Heart left ventricle (tissue), 16 donors: ENCODE measurements at regions of chr14 and their contacts with region 1.

Region 1: GRCh38 chr14:104708606-104709268 is 15.3 kb upstream of the ADSS1 start:
- DNase-seq: peak; percentile 59 to 84 (median 71)
- ATAC-seq: peak; percentile 39 to 74 (median 62)
- H3K4me3 ChIP-seq: no peak overlapping the region
- H3K27ac ChIP-seq: no peak overlapping the region
- H3K4me1 ChIP-seq: peaks cover 0 to 27% (median 5%) of the 10 kb centered on the region in 12 donors
- H3K27me3 ChIP-seq: no peaks in the 10 kb centered on the region
- CTCF ChIP-seq: peak; percentile 95 to 99 (median 97)
- POLR2A ChIP-seq: no peak

Region 2: GRCh38 chr14:104650057-104650981 is 58.4 kb before region 1 on chr14:
- intact Hi-C with region 1: loop called (anchors 1 to 2 kb)
- DNase-seq: peak; percentile 66 to 83 (median 71)
- ATAC-seq: peak; percentile 53 to 90 (median 80)
- H3K4me3 ChIP-seq: peak overlapping the region in 11 of 12 donors; percentile 14 to 63 (median 52)
- H3K27ac ChIP-seq: peak overlapping the region in 1 of 12 donors; percentile 13
- H3K4me1 ChIP-seq: peaks cover 0 to 17% (median 8%) of the 10 kb centered on the region in 12 donors
- H3K27me3 ChIP-seq: peaks cover 0 to 2% (median 0%) of the 10 kb centered on the region in 9 donors
- CTCF ChIP-seq: peak in 11 of 12 donors; percentile 94 to 100 (median 97)
- POLR2A ChIP-seq: no peak

Region 3: DNA sequence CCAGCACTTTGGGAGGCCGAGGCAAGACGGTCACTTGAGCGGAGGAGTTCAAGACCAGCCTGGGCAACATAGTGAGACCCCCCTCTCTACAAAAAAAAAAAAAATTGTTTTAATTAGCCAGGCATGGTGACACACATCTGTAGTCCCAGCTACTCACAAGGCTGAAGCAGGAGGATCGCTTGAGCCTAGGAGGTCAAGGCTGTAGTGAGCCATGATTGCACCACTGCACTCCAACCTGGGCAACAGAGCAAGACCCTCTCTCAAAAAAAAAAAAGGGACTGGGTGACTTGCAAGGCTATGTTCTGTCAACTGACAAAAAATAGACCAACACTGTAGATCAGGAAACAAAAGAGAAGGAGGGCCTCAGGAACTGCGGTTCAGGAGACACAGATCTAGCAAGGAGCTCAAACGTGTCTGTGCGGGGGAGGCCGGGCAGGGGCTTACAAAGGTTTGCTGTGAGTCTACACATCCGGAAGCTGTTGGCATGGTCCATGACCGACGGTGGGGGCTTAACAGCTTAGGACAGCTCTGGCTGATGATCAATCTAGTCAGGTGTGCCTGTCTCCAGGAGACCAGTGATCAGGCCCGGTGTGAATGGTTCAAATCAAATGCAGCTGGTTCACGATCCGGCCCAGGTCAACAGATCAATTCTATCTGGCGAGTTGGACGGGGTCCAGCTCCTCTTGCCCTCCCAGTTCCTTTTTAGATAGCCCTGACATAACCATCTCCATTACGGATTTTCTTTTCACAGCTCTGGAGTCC is 51.0 kb before region 1 on chr14:
- intact Hi-C with region 1: loop called in 1 of 10 experiments (anchors 2 kb)
- DNase-seq: no peak
- ATAC-seq: no peak
- H3K4me3 ChIP-seq: no peak overlapping the region
- H3K27ac ChIP-seq: no peak overlapping the region
- H3K4me1 ChIP-seq: peaks cover 0 to 27% (median 12%) of the 10 kb centered on the region in 12 donors
- H3K27me3 ChIP-seq: peaks cover 0 to 18% (median 0%) of the 10 kb centered on the region in 9 donors
- CTCF ChIP-seq: no peak
- POLR2A ChIP-seq: no peak

Region 4: GRCh38 chr14:104665657-104666522 is 42.8 kb before region 1 on chr14:
- intact Hi-C with region 1: loop called in 1 of 10 experiments (anchors 5 kb)
- DNase-seq: no peak
- ATAC-seq: peak; percentile 59 to 83 (median 82)
- H3K4me3 ChIP-seq: no peak overlapping the region
- H3K27ac ChIP-seq: peak overlapping the region in 1 of 12 donors; percentile 17
- H3K4me1 ChIP-seq: peaks cover 0 to 7% (median 0%) of the 10 kb centered on the region in 12 donors
- H3K27me3 ChIP-seq: peaks cover 0 to 3% (median 0%) of the 10 kb centered on the region in 9 donors
- CTCF ChIP-seq: peak in 11 of 12 donors; percentile 14 to 45 (median 31)
- POLR2A ChIP-seq: no peak